ENCODE measurements at regions of chr6 and their contacts with region 1.

Region 1: DNA sequence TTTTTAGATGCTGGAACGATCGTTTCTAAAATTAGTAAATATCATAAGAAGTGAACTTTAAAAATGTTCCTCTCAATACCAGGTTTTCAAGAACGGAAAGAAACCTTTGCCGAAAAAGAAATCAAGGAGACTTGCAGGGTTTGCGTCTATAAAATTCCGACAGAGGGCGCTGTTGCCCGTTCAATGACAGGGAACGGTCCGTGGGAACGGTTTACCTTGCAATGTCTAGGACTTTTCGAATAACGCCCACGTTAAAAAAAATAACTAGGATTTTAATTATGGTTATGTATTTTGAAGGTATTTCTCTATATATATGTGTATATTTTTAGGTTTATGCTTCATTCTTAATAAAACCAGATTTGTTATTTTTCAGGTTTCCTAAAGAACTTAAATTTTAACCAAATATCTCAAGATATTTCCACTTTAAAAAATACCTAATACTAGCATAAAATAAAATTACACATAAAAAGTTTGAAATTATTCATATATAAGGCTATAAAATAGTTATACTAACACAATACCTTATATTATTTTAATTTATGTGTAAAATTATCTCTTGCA is 2.5 kb upstream of the TFAP2B start:
- DNase-seq: peak; percentile 41 to 90 (median 80)

Region 2: DNA sequence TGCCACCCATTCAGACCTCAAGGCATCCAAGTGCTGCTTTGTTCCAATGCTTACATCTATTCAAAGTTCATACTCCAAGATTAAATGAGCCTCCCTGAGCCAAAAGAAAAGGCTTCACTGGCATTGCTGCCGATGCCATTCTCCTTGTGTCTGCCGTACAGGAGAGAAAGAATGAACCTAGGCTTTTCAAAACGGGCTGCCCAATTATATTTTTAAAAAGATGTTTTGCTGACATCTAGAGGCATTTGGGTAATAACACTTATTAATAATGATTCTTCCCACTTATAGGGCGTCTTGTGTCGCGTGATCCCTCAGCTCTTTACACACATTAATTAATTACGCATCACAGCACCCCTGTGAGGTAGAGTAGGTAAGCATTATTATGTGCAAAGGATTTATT is 725.7 kb after region 1 on chr6:
- intact Hi-C with region 1: loop called (anchors 5 kb)
- DNase-seq: peak in 2 of 42 donors; percentile 0 to 6

Measured in head of caudate nucleus (tissue), 42 donors.